ENCODE measurements at regions of chr11 and their contacts with region 1.

Region 1: GRCh38 chr11:8688414-8689362 is 6.1 kb downstream of the RPL27A start:
- DNase-seq: peak; percentile 99
- H3K4me3 ChIP-seq: peak overlapping the region; percentile 42 to 75 (median 56)
- H3K27ac ChIP-seq: peak overlapping the region; percentile 79 to 92 (median 88)
- H3K4me1 ChIP-seq: peaks cover 17 to 65% (median 53%) of the 10 kb centered on the region in 6 donors
- H3K27me3 ChIP-seq: no peaks in the 10 kb centered on the region
- CTCF ChIP-seq: peak in 4 of 11 experiments; percentile 15 to 43 (median 19)
- POLR2A ChIP-seq: peak in 1 of 3 donors; percentile 13

Region 2: DNA sequence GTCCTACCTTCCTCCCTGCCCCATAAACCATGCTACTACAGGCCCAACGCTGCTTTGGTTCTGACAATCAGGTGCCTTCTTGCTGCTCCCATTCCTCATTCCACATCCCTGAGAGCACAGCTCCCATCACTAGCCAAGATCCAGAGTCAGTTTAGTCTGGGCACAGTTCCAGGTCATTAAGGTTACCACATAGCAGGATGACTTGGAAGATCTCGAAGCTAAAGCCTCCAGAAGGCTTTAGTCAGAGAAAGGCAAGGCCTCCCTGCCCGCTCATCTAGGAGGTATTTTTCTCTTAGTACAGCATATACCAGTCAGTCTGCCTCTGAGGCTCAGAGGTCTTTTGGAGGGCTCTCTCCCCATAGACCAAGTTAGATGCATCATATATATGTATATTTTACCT is 36.5 kb before region 1 on chr11:
- intact Hi-C with region 1: no loop called
- DNase-seq: no peak
- H3K4me3 ChIP-seq: no peak overlapping the region
- H3K27ac ChIP-seq: no peak overlapping the region
- H3K4me1 ChIP-seq: no peaks in the 10 kb centered on the region
- H3K27me3 ChIP-seq: no peaks in the 10 kb centered on the region
- CTCF ChIP-seq: no peak
- POLR2A ChIP-seq: no peak

Region 3: GRCh38 chr11:8786933-8787332 is 98.2 kb after region 1 on chr11:
- intact Hi-C with region 1: no loop called
- DNase-seq: no peak
- H3K4me3 ChIP-seq: no peak overlapping the region
- H3K27ac ChIP-seq: peak overlapping the region in 2 of 8 donors; percentile 10 to 27
- H3K4me1 ChIP-seq: peaks cover 0 to 34% (median 9%) of the 10 kb centered on the region in 6 donors
- H3K27me3 ChIP-seq: no peaks in the 10 kb centered on the region
- CTCF ChIP-seq: peak in 1 of 11 experiments; percentile 6
- POLR2A ChIP-seq: no peak

Region 4: GRCh38 chr11:8813658-8814057 is 125.0 kb after region 1 on chr11:
- intact Hi-C with region 1: loop called (anchors 10 kb)
- DNase-seq: no peak
- H3K4me3 ChIP-seq: no peak overlapping the region
- H3K27ac ChIP-seq: peak overlapping the region in 6 of 8 donors; percentile 35 to 83 (median 70)
- H3K4me1 ChIP-seq: peaks cover 26 to 68% (median 54%) of the 10 kb centered on the region in 6 donors
- H3K27me3 ChIP-seq: peaks cover 0 to 5% (median 0%) of the 10 kb centered on the region in 7 donors
- CTCF ChIP-seq: peak; percentile 42 to 80 (median 68)
- POLR2A ChIP-seq: no peak

Region 5: GRCh38 chr11:8964324-8965320 is 275.9 kb after region 1 on chr11 and contains the start of gene TMEM9B:
- intact Hi-C with region 1: loop called (anchors 10 kb)
- DNase-seq: peak; percentile 98
- H3K4me3 ChIP-seq: peak within 1 kb of the TSS; percentile 74 to 97 (median 82)
- H3K27ac ChIP-seq: peak within 1 kb of the TSS; percentile 94 to 99 (median 97)
- H3K4me1 ChIP-seq: peaks cover 23 to 57% (median 43%) of the 10 kb centered on the region in 6 donors
- H3K27me3 ChIP-seq: no peaks in the 10 kb centered on the region
- CTCF ChIP-seq: no peak
- POLR2A ChIP-seq: peak; percentile 43 to 90 (median 51)
- total RNA-seq, gene TMEM9B: 31.5 to 56.5 (median 46.0) TPM

Region 6: GRCh38 chr11:9460322-9461067 is 771.8 kb after region 1 on chr11 and contains the start of gene ZNF143:
- intact Hi-C with region 1: loop called (anchors 5 kb)
- DNase-seq: peak; percentile 99
- H3K4me3 ChIP-seq: peak within 1 kb of the TSS; percentile 49 to 86 (median 68)
- H3K27ac ChIP-seq: peak within 1 kb of the TSS; percentile 93 to 100 (median 99)
- H3K4me1 ChIP-seq: peaks cover 12 to 51% (median 35%) of the 10 kb centered on the region in 6 donors
- H3K27me3 ChIP-seq: no peaks in the 10 kb centered on the region
- CTCF ChIP-seq: peak in 3 of 11 experiments; percentile 36 to 51 (median 39)
- POLR2A ChIP-seq: peak; percentile 83 to 94 (median 87)
- total RNA-seq, gene ZNF143: 24.2 to 42.5 (median 39.1) TPM